ENCODE measurements at regions of chr12 and their contacts with region 1.

Region 1: DNA sequence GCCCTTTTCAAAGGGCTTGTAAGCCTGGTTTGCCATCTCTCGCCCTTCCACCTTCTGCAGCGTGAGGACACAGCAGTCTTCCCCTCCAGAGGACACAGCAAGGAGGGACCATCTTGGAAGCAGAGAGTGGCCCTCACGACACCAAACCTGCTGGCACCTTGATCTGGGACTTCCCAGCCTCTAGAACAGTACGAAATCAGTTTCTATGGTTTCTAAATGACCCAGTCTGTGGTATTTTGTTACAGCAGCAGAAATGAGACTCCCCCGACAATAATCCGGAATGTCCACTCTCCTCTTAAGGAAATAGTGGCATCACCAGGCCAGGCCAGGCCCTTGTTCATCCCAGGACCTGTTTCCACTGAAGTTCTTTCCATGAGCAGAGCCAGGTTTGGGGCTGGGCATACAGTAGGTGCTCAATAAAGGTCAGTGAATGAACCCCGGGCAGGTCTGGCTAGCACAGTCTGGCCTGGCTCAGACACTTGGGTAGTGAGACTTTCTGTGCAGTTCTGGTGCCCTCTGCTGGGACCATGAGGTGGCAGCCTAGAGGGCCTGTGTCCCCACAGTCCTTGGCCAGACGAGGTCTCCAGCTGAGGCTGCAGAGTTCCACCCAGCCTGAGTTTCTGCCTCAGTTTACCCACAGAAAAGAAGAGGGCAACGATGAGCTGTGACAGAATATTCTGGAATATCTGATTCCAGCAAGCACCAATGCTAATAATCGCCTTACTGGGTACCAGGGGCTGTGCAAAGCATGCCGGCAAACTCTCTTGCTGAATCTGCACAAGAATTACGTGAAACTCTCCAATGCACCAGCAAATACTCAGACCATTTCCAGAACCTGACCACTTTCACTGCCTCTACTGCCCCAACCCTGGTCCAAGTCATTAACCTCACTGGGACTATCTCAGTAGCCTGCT is 14.0 kb downstream of the ABCB9 start:
- DNase-seq: peak; percentile 78 to 83 (median 83)
- ATAC-seq: peak; percentile 97 to 99 (median 98)
- H3K4me3 ChIP-seq: no peak overlapping the region
- H3K27ac ChIP-seq: no peak overlapping the region
- H3K4me1 ChIP-seq: no peaks in the 10 kb centered on the region
- H3K27me3 ChIP-seq: no peaks in the 10 kb centered on the region
- CTCF ChIP-seq: peak; percentile 82 to 97 (median 93)
- POLR2A ChIP-seq: no peak

Region 2: GRCh38 chr12:122860346-122861090 is 91.7 kb before region 1 on chr12:
- intact Hi-C with region 1: loop called (anchors 2 to 5 kb)
- DNase-seq: peak; percentile 82 to 89 (median 89)
- ATAC-seq: peak; percentile 61 to 65 (median 64)
- H3K4me3 ChIP-seq: no peak overlapping the region
- H3K27ac ChIP-seq: peak overlapping the region in 2 of 3 donors; percentile 57 to 81
- H3K4me1 ChIP-seq: peaks cover 0 to 60% (median 21%) of the 10 kb centered on the region in 4 donors
- H3K27me3 ChIP-seq: no peaks in the 10 kb centered on the region
- CTCF ChIP-seq: peak; percentile 84 to 96 (median 84)
- POLR2A ChIP-seq: no peak

Region 3: DNA sequence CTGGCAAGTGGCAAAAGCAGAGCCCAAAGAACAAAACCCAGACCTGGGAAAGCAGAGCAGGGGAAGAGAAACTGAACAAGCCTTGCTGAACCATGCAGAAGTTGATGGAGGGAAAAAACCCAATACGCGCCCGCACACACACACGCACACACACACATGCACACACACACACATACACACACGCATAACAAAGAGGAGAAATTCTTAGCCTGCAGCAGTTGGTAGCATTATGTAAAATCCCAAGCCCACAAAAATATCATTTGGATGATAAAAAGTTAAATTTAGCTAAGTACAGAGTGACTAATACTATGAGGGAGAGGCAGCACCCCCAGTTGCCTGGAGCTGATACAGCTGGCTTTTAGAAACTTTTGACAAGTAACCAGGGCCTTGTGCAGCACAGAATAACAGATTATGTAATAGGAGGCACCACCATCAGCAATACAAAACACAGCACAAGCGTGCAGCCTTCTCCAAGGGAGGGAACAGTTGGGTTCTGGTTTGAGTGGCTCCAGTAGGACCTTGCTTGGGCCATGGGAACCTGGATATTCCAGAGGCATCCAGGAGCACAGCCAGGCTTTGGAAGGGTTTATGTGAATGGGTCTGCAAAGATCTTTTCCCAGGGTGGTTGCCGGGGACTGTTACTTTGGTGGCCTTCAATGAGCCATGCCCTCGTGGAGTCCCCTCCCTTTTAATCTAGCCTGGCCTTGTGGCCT is 163.3 kb after region 1 on chr12:
- intact Hi-C with region 1: no loop called
- DNase-seq: no peak
- ATAC-seq: peak; percentile 27 to 48 (median 37)
- H3K4me3 ChIP-seq: no peak overlapping the region
- H3K27ac ChIP-seq: peak overlapping the region in 1 of 3 donors; percentile 13
- H3K4me1 ChIP-seq: peaks cover 0 to 30% (median 9%) of the 10 kb centered on the region in 4 donors
- H3K27me3 ChIP-seq: no peaks in the 10 kb centered on the region
- CTCF ChIP-seq: no peak
- POLR2A ChIP-seq: no peak